Breast epithelium (tissue), 4 donors: ENCODE measurements at regions of chr16 and their contacts with region 1.

Region 1: DNA sequence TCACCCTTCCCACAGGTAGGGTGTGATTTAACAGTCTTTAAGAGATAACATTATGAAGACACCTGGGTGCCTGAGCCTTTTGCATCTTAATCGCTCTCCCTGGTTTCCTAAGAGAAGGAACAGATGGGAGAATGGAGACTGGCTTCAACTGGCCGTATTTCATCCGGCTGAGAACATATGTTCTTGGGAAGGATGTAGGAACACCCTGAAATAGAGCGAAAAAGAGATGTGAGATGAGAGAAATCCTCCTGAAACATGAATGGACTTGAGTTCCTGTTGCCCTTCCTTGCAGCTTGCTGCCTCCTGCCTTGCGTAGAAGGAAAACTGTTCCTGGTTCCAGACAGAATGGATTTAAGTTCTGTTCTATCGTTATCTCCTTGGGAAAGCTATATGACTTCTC is 385.4 kb upstream of the RBFOX1 start:
- DNase-seq: no peak
- H3K4me3 ChIP-seq: no peak overlapping the region
- H3K27ac ChIP-seq: no peak overlapping the region
- H3K4me1 ChIP-seq: no peaks in the 10 kb centered on the region
- H3K27me3 ChIP-seq: no peaks in the 10 kb centered on the region
- CTCF ChIP-seq: no peak
- POLR2A ChIP-seq: no peak

Region 2: DNA sequence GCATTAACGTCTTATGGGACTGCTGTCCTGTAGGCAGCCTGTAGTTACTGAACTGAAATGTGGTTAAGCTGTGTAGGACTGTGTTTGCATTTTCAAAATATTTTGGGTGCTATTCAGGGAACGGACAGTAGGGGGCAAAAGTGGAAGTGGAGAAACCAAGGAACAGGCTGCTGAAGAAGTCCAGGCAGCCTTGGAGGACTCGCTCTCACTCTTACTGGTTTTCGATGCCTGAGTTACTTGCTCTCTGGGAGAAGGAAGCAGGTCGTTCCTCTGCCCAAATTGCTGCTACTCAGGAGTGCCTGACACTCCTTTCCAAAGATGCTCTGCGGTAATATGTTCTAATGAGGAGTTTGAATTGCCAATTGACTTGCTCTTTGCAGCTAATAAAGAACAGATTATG is 320.9 kb after region 1 on chr16:
- intact Hi-C with region 1: loop called (anchors 5 kb)
- DNase-seq: no peak
- H3K4me3 ChIP-seq: no peak overlapping the region
- H3K27ac ChIP-seq: no peak overlapping the region
- H3K4me1 ChIP-seq: no peaks in the 10 kb centered on the region
- H3K27me3 ChIP-seq: no peaks in the 10 kb centered on the region
- CTCF ChIP-seq: no peak
- POLR2A ChIP-seq: no peak